ENCODE measurements at regions of chr3 and their contacts with region 1.

Region 1: GRCh38 chr3:23926736-23927135 is 9.8 kb downstream of the RPL15 start:
- DNase-seq: no peak
- H3K4me3 ChIP-seq: no peak overlapping the region
- H3K27ac ChIP-seq: no peak overlapping the region
- H3K4me1 ChIP-seq: no peaks in the 10 kb centered on the region
- H3K27me3 ChIP-seq: no peaks in the 10 kb centered on the region
- CTCF ChIP-seq: no peak
- POLR2A ChIP-seq: no peak

Region 2: DNA sequence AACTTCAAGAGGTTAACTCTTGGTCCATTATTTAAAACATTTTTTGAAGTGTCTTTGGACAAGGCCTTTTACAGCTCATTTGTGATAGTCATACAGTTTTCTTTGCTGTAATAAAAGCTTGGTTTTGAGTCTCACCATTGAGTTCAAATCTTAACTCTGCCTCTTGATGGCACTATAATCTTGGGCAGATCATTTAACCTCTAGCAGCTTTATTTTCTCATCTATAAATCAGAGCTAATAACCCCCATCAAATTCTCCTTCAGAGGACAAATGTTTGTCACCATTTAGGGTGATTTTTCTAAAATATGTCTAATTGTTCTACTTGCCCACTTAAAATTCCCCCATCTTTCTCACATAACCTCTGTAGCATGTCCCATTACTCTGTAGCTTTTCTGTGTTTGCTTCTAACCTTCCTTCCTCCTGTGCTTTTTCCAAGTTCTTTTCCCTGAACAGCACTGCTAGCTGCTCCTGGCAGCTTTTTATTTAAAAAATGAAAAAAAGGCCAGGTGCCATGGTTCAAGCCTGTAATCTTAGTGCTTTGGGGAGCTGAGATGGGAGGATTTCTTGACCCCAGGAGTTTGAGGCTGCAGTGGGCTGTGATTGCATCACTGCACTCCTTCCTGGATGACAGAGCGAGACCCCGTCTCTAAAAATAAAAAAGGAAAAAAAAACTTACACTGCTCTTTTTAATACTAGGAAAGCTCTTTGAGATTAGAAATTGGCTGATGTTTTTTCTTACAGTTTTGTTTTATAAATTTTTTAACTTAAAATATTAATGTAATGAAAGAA is 92.5 kb before region 1 on chr3:
- intact Hi-C with region 1: no loop called
- DNase-seq: no peak
- H3K4me3 ChIP-seq: no peak overlapping the region
- H3K27ac ChIP-seq: no peak overlapping the region
- H3K4me1 ChIP-seq: peaks cover 56% of the 10 kb centered on the region
- H3K27me3 ChIP-seq: no peaks in the 10 kb centered on the region
- CTCF ChIP-seq: no peak
- POLR2A ChIP-seq: no peak

Region 3: DNA sequence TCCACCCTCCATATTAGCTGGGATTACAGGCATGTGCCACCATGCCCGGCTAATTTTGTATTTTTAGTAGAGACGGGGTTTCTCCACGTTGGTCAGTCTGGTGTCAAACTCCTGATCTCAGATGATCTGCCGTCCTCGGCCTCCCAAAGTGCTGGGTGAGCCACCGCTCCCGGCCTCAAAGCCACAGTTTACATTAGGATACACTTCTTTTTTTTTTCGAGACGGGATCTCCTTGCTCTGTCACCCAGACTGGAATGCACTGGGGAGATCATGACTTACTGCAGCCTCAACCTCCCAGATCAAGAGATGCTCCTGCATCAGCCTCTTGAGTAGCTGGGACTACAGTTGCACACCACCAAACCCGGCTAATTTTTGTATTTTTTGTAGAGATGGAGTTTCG is 15.8 kb after region 1 on chr3:
- intact Hi-C with region 1: loop called (anchors 2 kb)
- DNase-seq: no peak
- H3K4me3 ChIP-seq: no peak overlapping the region
- H3K27ac ChIP-seq: no peak overlapping the region
- H3K4me1 ChIP-seq: peaks cover 20% of the 10 kb centered on the region
- H3K27me3 ChIP-seq: no peaks in the 10 kb centered on the region
- CTCF ChIP-seq: no peak
- POLR2A ChIP-seq: no peak